ENCODE measurements at regions of chr12 and their contacts with region 1.

Region 1: GRCh38 chr12:57250541-57251324 is at the start of gene STAC3:
- DNase-seq: no peak
- H3K4me3 ChIP-seq: no peak within 1 kb of the TSS
- H3K27ac ChIP-seq: no peak within 1 kb of the TSS
- H3K4me1 ChIP-seq: no peaks in the 10 kb centered on the region
- H3K27me3 ChIP-seq: no peaks in the 10 kb centered on the region
- CTCF ChIP-seq: no peak
- total RNA-seq, gene STAC3: 7.0 and 8.4 TPM in 2 replicates

Region 2: DNA sequence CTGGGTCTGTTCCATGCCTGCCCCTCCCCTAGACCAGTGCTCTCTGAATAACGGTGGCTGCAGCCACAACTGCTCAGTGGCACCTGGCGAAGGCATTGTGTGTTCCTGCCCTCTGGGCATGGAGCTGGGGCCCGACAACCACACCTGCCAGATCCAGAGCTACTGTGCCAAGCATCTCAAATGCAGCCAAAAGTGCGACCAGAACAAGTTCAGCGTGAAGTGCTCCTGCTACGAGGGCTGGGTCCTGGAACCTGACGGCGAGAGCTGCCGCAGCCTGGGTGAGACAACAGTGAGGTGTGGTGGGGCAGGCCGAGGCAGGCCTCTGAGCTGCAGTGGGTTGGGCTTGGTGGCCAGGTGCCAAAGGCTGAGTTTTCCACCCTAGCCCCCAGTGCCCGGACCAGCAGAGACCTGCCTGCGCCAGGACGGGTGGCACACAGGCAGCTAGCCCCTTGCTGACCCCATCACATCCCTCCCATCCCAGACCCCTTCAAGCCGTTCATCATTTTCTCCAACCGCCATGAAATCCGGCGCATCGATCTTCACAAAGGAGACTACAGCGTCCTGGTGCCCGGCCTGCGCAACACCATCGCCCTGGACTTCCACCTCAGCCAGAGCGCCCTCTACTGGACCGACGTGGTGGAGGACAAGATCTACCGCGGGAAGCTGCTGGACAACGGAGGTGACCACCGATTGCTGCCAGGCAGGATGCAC is 75.2 kb before region 1 on chr12:
- CTCF ChIA-PET with region 1: no interaction called
- POLR2A ChIA-PET with region 1: no interaction called
- intact Hi-C with region 1: no loop called
- DNase-seq: peak; percentile 65
- H3K4me3 ChIP-seq: no peak overlapping the region
- H3K27ac ChIP-seq: no peak overlapping the region
- H3K4me1 ChIP-seq: no peaks in the 10 kb centered on the region
- H3K27me3 ChIP-seq: no peaks in the 10 kb centered on the region
- CTCF ChIP-seq: peak; percentile 90

Region 3: DNA sequence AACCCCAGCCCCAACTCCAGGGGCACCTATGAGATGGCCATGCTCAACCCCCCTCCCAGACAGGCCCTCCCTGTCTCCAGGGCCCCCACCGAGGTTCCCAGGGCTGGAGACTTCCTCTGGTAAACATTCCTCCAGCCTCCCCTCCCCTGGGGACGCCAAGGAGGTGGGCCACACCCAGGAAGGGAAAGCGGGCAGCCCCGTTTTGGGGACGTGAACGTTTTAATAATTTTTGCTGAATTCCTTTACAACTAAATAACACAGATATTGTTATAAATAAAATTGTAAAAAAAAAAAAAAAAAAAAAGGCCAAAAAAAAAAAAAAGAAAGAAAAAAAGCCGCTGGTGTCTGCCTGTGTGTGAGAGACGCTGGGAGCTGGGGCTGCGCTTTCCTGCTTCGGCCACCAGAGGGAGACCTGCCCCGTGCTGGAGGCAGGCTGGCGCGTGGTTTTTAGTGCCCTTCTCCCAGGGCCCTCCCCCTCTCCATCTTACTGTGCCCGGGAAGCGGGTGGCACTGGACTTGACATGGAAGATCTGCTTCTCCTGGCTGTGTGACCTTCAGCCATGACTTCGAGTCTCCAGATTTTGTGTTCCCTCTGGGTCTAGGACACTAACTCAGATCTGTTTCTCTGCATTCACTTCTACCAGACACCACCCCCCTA is 37.5 kb before region 1 on chr12:
- CTCF ChIA-PET with region 1: no interaction called
- POLR2A ChIA-PET with region 1: interaction called, 10 read pairs
- intact Hi-C with region 1: no loop called
- DNase-seq: peak; percentile 90
- H3K4me3 ChIP-seq: no peak overlapping the region
- H3K27ac ChIP-seq: no peak overlapping the region
- H3K4me1 ChIP-seq: peaks cover 28% of the 10 kb centered on the region
- H3K27me3 ChIP-seq: peaks cover 19% of the 10 kb centered on the region
- CTCF ChIP-seq: peak; percentile 95

Region 4: DNA sequence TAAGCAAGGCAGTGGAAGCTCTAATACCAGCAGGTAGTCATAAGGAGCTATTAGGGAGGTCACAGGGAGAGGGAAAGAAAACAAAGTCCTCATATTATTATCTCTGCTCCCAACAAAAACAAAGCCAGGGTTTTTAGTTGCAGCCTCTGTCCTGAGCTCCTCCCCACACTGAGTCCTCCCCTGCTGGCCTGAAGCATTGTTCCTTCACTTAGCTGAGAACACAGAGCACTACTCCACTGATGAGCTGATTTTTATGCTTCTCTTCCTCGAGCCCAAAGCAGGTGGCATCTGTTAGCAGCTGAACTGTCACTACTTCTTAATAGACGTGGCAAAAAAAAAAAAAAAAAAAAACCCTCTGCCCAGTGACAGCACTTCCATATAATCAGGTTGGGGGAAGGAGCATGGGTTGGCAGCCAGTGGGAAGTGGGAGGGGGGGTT is 10.7 kb after region 1 on chr12:
- CTCF ChIA-PET with region 1: interaction called, 10 read pairs
- POLR2A ChIA-PET with region 1: no interaction called
- intact Hi-C with region 1: no loop called
- DNase-seq: no peak
- H3K4me3 ChIP-seq: no peak overlapping the region
- H3K27ac ChIP-seq: no peak overlapping the region
- H3K4me1 ChIP-seq: no peaks in the 10 kb centered on the region
- H3K27me3 ChIP-seq: no peaks in the 10 kb centered on the region
- CTCF ChIP-seq: no peak

Region 5: DNA sequence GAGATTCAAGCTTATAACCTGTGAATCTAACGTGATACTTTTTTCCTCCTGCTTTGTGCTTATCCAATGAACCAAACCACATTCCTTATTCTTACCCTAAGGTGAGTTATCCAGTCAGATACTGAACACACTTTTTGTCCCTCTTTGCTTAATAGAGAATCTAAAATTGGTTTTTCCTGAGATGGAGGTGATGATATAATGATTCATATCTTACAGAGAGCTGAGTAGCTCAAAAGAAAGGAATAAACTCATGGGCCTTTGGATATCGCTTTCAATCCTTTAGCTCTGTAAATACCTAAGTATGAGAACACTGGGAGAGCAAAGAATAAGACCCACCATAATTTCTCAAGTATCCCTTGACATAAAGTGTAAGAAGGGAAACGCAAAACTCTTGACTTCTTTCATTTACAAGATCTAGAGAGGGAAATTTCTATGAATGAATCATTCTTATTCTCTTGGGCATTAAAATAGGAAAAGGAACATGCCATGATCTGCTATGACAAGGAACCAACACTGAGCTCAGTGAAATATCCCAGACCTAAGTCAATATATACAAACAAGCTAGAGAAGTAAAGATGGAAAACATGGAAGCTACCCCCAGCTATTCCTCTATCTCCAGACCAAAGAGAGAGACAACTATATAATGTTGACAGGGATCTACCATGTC is 82.0 kb after region 1 on chr12:
- CTCF ChIA-PET with region 1: interaction called, 10 read pairs
- POLR2A ChIA-PET with region 1: no interaction called
- intact Hi-C with region 1: no loop called
- DNase-seq: no peak
- H3K4me3 ChIP-seq: no peak overlapping the region
- H3K27ac ChIP-seq: no peak overlapping the region
- H3K4me1 ChIP-seq: no peaks in the 10 kb centered on the region
- H3K27me3 ChIP-seq: no peaks in the 10 kb centered on the region
- CTCF ChIP-seq: no peak

Measured in A673 (cell line).